ENCODE measurements at regions of chr14 and their contacts with region 1.

Region 1: DNA sequence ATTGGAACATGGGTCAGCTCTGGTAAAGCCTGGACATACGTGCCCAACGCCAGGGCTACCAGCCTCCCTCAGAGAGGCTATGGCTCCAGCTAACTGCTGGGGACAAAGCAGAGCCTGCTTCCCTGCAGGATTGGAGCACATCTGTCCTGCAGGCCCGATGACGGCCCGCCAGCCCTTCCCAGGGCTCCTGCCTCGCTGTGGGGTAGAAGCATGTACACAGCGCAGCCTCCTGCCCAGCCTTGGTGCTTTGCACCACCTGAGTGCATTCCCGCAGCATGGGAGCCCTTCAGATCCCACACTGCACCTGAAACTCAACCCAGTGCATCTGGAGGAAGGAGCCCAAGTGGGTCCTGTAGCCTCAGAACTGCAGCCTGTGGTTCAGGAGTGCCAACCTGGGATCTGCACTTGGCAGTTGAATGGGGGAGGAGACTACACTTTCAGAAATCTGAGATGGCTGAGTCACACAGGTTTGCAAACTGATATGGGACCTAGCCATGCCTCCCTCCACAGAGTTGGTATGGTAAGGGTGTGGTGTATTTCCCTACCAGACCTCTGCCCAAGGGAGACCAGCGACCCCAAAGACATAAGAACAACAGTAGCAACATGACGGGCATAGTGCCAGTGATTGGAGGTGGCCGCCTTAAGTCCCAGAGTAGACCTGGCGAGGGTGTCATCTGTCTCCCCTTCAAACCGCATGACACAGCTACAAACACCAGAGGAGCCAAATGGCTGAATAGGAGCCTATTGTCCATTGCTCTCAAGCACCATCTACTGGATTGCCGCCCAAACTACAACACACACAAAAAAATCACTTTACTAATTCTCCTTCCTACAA is 273.9 kb upstream of the MIS18BP1 start:
- DNase-seq: peak; percentile 40
- H3K4me3 Mint-ChIP-seq: no peak overlapping the region
- H3K27ac Mint-ChIP-seq: no peak overlapping the region
- H3K4me1 Mint-ChIP-seq: no peaks in the 10 kb centered on the region
- H3K27me3 Mint-ChIP-seq: no peaks in the 10 kb centered on the region
- CTCF ChIP-seq: no peak

Region 2: GRCh38 chr14:45284802-45285201 is 242.1 kb before region 1 on chr14:
- CTCF ChIA-PET with region 1: no interaction called
- intact Hi-C with region 1: loop called (anchors 5 kb)
- DNase-seq: no peak
- H3K4me3 Mint-ChIP-seq: no peak overlapping the region
- H3K27ac Mint-ChIP-seq: no peak overlapping the region
- H3K4me1 Mint-ChIP-seq: peaks cover 20% of the 10 kb centered on the region
- H3K27me3 Mint-ChIP-seq: no peaks in the 10 kb centered on the region
- CTCF ChIP-seq: no peak

Region 3: DNA sequence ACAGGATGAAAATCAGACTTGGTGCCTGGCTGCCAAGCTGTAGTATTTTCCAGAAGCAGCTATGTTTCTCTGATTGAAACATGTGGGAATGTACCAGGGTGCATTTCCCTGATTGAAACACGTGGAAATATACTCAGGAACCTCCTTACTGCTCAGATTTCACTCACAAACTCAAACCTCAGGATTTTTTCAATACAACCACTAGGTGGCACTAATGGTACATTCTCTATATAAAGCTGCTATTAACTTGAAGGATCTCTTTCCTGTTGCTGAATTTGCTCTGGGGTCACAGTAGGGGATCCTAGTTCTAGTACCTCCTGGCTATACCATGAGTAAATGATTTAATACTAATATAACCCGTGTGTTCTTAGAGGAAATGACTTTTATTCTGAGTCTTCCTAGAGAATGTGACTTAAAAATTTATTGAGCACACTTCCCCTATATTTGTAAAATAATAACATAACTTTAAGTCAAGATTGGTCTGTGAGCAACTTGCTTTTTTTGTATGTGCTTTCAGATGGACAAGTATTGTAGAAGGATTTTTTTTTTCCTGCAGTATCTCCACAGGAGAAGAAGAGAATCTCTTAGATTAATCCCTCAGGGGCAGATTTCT is 100.2 kb before region 1 on chr14:
- CTCF ChIA-PET with region 1: interaction called, 8 read pairs
- intact Hi-C with region 1: loop called (anchors 1 kb)
- DNase-seq: peak; percentile 6
- H3K4me3 Mint-ChIP-seq: no peak overlapping the region
- H3K27ac Mint-ChIP-seq: no peak overlapping the region
- H3K4me1 Mint-ChIP-seq: no peaks in the 10 kb centered on the region
- H3K27me3 Mint-ChIP-seq: peaks cover under 1% of the 10 kb centered on the region
- CTCF ChIP-seq: peak; percentile 59